ENCODE measurements at regions of chr2 and their contacts with region 1.

Region 1: GRCh38 chr2:156589381-156590079 is 153.4 kb downstream of the GPD2 start:
- DNase-seq: peak; percentile 62
- ATAC-seq: peak; percentile 74
- H3K4me3 ChIP-seq: no peak overlapping the region
- H3K27ac ChIP-seq: no peak overlapping the region
- H3K4me1 ChIP-seq: no peaks in the 10 kb centered on the region
- H3K27me3 ChIP-seq: no peaks in the 10 kb centered on the region
- CTCF ChIP-seq: peak; percentile 72
- POLR2A ChIP-seq: no peak
- RAD21 ChIP-seq: peak; percentile 85

Region 2: DNA sequence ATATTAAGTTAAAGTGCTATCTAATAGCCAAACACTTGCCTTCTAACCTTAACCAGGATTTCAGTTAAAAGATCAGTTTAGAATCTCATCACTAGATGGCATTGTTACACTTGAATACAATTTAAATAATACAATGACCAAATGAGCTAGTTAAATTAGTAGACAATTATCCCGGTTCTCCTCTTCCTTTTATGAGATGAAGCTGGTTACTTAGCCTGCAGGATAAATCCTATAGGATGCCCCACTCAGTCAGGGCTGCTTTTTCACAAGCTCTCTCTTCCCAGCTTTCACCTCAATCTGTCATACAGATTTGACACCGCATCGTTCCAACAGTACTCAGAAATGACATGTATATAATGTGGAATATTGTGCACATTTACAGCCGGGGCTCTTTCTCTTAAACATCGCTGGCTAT is 1212.3 kb before region 1 on chr2:
- CTCF ChIA-PET with region 1: no interaction called
- POLR2A ChIA-PET with region 1: no interaction called
- dilution Hi-C with region 1: no loop called
- in situ Hi-C with region 1: loop called (anchors 25 kb)
- intact Hi-C with region 1: loop called (anchors 2 kb)
- DNase-seq: peak; percentile 35
- ATAC-seq: no peak
- H3K4me3 ChIP-seq: no peak overlapping the region
- H3K27ac ChIP-seq: no peak overlapping the region
- H3K4me1 ChIP-seq: no peaks in the 10 kb centered on the region
- H3K27me3 ChIP-seq: no peaks in the 10 kb centered on the region
- CTCF ChIP-seq: peak; percentile 43
- POLR2A ChIP-seq: no peak
- RAD21 ChIP-seq: peak; percentile 46

Measured in IMR-90 (cell line).